Activated CD8-positive, alpha-beta memory T cell treated with anti-CD3 and anti-CD28 coated beads, Interleukin-2, amount 10 ng/mL, durations not matched to agents 7 days and 5 days (primary cell): ENCODE measurements at regions of chr9 and their contacts with region 1.

Region 1: DNA sequence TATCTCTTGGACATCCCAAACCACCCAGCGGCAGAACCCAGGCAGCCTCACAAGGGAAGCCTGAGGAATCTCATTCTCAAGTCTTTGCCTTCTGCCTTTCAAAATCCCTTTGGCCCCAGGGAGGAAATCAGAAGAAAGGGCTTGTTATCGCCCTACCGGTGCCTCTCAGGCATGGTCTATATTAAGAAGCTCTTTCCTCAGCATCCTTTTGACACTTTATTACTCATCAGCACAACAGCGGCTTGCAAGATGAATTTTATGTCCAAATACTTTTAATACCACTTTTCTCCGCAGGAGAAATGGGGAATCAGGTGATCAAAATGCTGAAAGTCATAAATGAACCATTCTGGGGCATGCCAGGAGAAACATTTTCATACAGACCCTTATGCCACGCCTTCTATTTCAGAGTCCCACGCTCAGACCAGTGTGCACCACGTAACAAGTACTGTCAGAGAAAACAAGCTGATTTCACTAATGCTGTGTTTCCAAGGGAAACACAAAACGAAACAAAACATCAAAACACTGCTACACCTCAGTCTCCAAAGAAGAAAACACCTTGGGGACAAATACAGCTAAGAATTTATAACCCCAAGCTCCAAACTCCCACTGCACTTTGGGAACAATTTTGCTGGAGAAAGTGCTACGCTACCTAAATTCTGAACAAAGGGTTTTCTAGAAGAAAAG is 30.0 kb downstream of the RAPGEF1 start:
- DNase-seq: peak; percentile 67
- ATAC-seq: peak; percentile 82
- H3K4me3 Mint-ChIP-seq: peak overlapping the region; percentile 54
- H3K27ac Mint-ChIP-seq: peak overlapping the region; percentile 90
- H3K4me1 Mint-ChIP-seq: peaks cover 82% of the 10 kb centered on the region
- H3K27me3 Mint-ChIP-seq: no peaks in the 10 kb centered on the region

Region 2: DNA sequence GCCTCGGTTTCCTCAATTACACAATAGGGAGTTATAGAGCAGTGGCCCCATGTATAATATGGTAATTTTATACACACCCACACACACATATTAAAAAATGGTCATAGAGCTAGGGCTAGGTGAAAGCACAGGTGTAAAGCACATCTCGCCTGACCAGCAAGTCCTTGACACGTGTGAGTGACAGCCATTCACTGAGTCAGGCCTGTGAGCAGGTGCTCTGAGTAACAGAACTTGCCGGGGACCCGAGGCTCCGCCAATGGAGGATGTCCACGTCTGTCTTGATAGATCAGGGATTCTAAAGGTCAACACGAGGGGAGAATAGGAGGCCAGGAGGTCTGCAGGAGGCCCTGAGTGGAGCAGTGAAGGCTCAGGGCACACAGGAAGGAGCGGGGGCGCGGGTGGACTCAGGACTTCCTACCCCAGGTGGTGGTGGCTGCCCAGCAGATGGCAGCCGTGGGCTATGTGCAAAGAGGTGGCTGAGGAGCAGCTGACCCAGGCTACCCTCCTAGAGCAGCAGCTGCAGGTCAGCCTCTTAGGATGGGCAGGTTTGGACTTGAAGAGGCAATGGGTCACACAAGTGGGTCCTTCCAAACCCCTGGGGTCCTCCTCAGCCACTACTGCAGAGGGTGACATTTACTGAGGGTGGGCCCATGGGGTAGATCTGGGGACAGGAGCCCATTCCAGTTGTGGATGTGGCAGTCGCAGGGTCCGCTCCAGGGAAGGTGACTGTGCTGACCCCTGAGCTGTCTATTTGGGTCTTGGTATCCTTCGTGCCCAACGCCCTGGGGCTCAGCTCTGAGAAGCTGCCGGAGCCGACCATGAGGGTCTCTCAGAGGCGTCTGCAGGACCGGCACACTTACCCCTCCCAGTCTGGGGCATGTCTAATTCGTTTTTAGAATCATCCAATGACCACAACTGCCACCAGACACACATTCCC is 118.7 kb before region 1 on chr9:
- CTCF ChIA-PET with region 1: interaction called, 13 read pairs
- DNase-seq: peak; percentile 85
- ATAC-seq: peak; percentile 89
- H3K4me3 Mint-ChIP-seq: no peak overlapping the region
- H3K27ac Mint-ChIP-seq: peak overlapping the region; percentile 85
- H3K4me1 Mint-ChIP-seq: peaks cover 44% of the 10 kb centered on the region
- H3K27me3 Mint-ChIP-seq: no peaks in the 10 kb centered on the region

Region 3: GRCh38 chr9:131697097-131697496 is 12.8 kb before region 1 on chr9:
- CTCF ChIA-PET with region 1: interaction called, 12 read pairs
- DNase-seq: no peak
- ATAC-seq: no peak
- H3K4me3 Mint-ChIP-seq: no peak overlapping the region
- H3K27ac Mint-ChIP-seq: no peak overlapping the region
- H3K4me1 Mint-ChIP-seq: peaks cover 66% of the 10 kb centered on the region
- H3K27me3 Mint-ChIP-seq: no peaks in the 10 kb centered on the region

Region 4: DNA sequence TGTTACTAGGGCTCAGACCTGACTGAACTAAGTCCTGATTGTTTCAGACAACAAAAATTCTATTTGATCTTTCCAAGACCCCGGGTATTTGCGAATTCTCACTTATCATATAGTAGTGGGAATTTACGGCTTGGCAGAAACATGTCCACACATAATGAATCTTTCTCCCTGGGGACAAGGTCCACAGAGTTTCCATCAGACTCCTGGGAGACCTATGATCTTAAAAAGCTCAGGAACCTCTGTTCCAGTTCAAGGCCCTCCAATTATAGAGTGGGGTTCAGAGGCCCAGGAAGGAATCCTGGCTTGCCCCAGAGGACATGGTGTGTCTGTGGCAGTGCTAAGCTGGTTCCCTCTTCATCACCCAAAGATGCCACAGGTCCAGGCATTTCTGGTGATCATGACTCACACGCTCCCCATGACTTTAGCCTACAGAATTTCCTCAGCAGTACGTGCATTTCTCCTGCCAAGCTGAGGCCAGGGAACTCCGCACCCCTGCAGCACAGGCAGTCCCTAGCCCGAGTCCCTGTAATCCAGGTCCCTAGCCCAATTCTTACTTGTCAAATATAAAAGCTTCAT is 17.4 kb after region 1 on chr9:
- CTCF ChIA-PET with region 1: interaction called, 35 read pairs
- DNase-seq: peak; percentile 61
- ATAC-seq: peak; percentile 6
- H3K4me3 Mint-ChIP-seq: peak overlapping the region; percentile 73
- H3K27ac Mint-ChIP-seq: peak overlapping the region; percentile 96
- H3K4me1 Mint-ChIP-seq: peaks cover 84% of the 10 kb centered on the region
- H3K27me3 Mint-ChIP-seq: no peaks in the 10 kb centered on the region